Astrocyte of the cerebellum (primary cell): ENCODE measurements at regions of chr3 and their contacts with region 1.

Region 1: GRCh38 chr3:156547637-156548036 is 7.3 kb downstream of the SSR3 start:
- DNase-seq: peak; percentile 29
- H3K4me3 ChIP-seq: no peak overlapping the region
- CTCF ChIP-seq: no peak

Region 2: DNA sequence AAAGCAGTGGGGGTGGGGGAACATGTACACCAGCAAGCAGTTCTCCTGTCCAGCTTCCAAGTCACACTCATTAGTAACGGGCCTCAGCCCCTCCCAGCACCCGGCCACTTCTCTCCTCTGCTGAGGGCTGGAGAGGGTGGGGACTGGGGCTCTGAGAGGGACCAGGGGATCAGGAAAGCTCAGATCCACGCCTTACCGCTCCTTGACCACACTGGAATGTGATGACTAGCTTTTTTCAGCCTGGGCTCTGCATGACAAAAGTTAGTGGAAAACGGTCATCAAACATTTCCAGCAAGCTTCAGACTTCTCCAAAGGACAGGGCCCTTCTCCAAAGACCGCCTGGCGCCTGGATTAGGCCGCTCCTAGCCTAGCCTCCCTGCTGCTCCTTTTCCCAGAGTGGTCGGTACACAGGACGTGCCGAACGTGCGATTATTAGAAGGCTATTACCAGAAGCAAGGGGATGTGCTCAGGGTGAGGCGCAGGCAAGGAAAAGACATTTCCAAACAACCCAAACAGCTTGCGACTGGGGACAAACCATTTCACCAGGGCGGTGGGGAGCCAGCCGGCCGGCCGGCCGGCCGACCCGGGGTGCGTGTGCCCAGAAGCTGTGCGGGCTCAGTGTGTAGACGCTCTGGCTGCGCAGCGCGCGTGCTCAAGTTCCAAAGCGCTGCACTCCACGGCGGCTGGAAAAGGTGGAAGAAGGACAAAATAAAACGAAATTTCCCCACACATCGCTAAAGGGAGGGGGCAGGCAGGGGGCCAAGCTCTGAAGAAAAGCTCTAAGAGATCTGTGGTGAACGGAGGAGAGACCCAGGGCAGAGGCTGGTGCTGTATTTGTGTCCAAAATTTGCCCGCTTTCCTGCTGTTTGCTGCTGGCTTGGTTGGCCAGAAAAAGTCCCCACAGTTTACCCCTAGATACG is 58.3 kb after region 1 on chr3:
- in situ Hi-C with region 1: loop called (anchors 10 kb)
- DNase-seq: peak; percentile 72
- H3K4me3 ChIP-seq: peak overlapping the region; percentile 25
- CTCF ChIP-seq: no peak